AG04450 (cell line): ENCODE measurements at regions of chr13 and their contacts with region 1.

Region 1: DNA sequence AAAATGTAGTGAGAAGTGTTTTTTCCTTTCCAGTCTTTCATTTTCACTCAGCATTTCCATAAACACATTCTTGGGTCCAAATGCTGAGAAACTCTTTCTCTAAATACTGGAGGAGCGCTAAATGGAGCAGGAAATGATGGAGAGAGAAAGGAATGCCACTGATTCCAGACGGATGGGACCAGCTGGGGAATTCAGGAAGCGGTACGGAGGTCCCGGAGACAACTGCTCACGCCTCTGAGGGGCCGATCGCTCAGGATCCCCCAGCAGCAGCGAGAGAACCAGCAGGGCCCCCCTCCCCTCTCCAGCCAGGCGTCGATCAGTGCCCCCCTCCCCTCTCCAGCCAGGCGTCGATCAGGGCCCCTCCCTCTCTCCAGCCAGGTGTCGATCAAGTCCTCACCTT is 13.2 kb downstream of the RASA3 start:
- DNase-seq: peak; percentile 85
- H3K4me3 ChIP-seq: peak overlapping the region; percentile 37
- H3K27ac ChIP-seq: peak overlapping the region; percentile 98
- H3K27me3 ChIP-seq: no peaks in the 10 kb centered on the region
- CTCF ChIP-seq: no peak

Region 2: DNA sequence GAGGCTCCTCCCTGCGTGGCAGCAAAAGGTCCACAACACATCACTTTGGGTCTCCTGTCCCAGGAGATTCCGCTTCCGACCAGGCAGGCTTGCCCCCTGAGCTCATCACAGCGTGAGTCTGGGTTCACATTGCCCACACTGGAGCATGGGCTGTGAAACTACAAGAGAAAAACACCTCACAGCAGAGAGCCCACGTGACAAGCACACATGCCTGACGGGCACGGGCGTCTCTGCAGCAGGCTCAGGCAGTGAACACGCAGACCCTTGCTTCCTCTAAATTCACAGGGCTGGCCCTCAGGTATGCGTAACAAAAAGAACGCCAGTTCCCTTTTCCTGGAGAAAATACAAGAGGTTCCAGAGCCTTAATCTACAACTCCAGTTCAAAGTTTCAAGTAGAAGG is 28.7 kb before region 1 on chr13:
- CTCF ChIA-PET with region 1: no interaction called
- POLR2A ChIA-PET with region 1: no interaction called
- DNase-seq: no peak
- H3K4me3 ChIP-seq: no peak overlapping the region
- H3K27ac ChIP-seq: no peak overlapping the region
- H3K27me3 ChIP-seq: no peaks in the 10 kb centered on the region
- CTCF ChIP-seq: no peak

Region 3: GRCh38 chr13:114132419-114133121 is 13.4 kb after region 1 on chr13 and contains the start of gene RASA3:
- CTCF ChIA-PET with region 1: no interaction called
- POLR2A ChIA-PET with region 1: interaction called, 11 read pairs
- DNase-seq: no peak
- H3K4me3 ChIP-seq: peak within 1 kb of the TSS; percentile 93
- H3K27ac ChIP-seq: peak within 1 kb of the TSS; percentile 96
- H3K27me3 ChIP-seq: no peaks in the 10 kb centered on the region
- CTCF ChIP-seq: no peak
- polyA plus RNA-seq, gene RASA3: 25.2 and 26.8 TPM in 2 replicates